Mammary epithelial cell (primary cell): ENCODE measurements at regions of chr10 and their contacts with region 1.

Region 1: DNA sequence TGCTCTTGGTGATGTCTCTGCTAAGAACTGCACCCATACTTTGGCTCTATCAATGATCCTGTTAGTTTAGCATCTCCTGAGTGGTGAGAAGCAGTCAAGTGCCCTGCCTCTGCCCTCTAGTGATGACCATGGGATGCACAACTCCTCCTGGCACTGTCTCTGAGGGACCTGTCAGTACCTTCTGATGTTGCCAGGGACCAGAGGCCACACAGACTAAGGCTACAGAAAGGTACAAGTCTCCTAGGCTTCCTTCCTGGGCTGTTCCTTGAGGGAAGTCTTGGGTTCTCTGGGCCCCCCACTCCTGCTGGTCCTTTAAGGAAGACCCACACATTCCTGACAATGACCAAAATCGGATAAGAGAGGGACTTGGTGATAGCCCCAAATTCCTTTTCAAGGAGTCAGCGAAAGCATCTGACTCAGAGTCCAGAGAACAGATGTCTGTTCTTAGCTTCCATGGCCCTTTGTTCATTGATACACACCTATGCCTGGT is 15.3 kb downstream of the NKX2-3 start:
- DNase-seq: peak; percentile 55
- H3K4me3 ChIP-seq: no peak overlapping the region
- H3K27ac ChIP-seq: no peak overlapping the region
- H3K4me1 ChIP-seq: peaks cover 8% of the 10 kb centered on the region
- H3K27me3 ChIP-seq: peaks cover 3% of the 10 kb centered on the region
- CTCF ChIP-seq: peak; percentile 12 to 57

Region 2: DNA sequence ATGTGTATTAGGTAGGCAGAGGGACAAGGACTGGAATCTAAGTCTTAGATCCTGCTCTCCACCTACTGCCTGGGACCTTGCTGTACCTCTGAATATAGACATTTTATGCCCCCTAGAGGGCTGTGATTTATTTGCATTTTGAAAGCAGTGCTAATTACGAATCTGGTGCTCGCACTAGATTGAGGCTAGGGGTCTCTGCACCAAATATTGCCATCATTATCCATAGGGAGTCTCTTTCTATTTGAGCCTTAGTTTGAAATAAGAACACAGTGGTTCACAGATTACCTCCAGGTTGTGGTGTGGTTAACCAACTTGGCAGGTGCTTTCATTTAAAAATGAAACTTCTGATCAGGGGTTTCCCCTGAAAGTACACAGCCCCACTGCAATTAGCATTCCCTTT is 177.1 kb before region 1 on chr10:
- CTCF ChIA-PET with region 1: no interaction called
- dilution Hi-C with region 1: no loop called
- in situ Hi-C with region 1: no loop called
- intact Hi-C with region 1: no loop called
- DNase-seq: peak; percentile 25
- H3K4me3 ChIP-seq: no peak overlapping the region
- H3K27ac ChIP-seq: no peak overlapping the region
- H3K4me1 ChIP-seq: no peaks in the 10 kb centered on the region
- H3K27me3 ChIP-seq: no peaks in the 10 kb centered on the region
- CTCF ChIP-seq: peak; percentile 46 to 64

Region 3: GRCh38 chr10:99435986-99436638 is 112.0 kb before region 1 on chr10:
- CTCF ChIA-PET with region 1: no interaction called
- dilution Hi-C with region 1: no loop called
- in situ Hi-C with region 1: no loop called
- intact Hi-C with region 1: loop called (anchors 1 kb)
- DNase-seq: peak; percentile 37
- H3K4me3 ChIP-seq: no peak overlapping the region
- H3K27ac ChIP-seq: no peak overlapping the region
- H3K4me1 ChIP-seq: peaks cover 3% of the 10 kb centered on the region
- H3K27me3 ChIP-seq: no peaks in the 10 kb centered on the region
- CTCF ChIP-seq: peak; percentile 42 to 52

Region 4: DNA sequence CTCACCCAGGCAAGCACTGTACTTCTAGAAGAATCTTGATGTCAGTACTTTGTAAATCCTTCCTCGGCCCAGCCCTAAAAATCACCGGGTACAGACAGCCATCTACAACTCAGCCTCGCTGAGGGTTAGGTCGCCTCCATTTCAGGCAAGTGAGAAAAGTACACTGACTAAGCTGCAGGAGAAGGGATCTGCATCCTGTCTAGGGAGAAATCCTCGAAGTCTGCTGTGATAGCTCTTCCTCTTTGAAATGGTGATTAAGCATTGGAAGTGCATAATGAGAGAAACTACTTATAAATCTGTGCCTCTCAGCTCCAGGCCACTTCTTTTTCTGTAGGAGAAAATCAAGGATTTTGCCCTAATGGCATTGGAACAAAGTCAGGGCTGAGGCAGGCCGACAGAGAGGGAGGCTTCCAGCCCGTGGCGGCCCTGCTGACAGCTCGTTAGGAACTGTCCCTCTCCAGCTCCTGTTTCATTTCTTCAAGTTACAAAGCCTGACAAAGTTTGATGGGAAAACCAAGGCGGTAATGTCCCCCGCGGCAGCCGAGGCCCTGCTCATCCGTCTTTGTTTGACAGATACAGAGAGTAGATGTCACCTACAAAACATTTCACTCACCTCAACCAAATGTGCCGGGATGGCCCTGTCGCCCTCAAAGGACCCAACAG is 103.6 kb before region 1 on chr10:
- CTCF ChIA-PET with region 1: no interaction called
- dilution Hi-C with region 1: loop called (anchors 5 kb)
- in situ Hi-C with region 1: no loop called
- intact Hi-C with region 1: no loop called
- DNase-seq: no peak
- H3K4me3 ChIP-seq: no peak overlapping the region
- H3K27ac ChIP-seq: no peak overlapping the region
- H3K4me1 ChIP-seq: no peaks in the 10 kb centered on the region
- H3K27me3 ChIP-seq: no peaks in the 10 kb centered on the region
- CTCF ChIP-seq: no peak

Region 5: GRCh38 chr10:99484603-99485581 is 63.2 kb before region 1 on chr10:
- CTCF ChIA-PET with region 1: no interaction called
- dilution Hi-C with region 1: no loop called
- in situ Hi-C with region 1: no loop called
- intact Hi-C with region 1: loop called (anchors 1 kb)
- DNase-seq: peak; percentile 2
- H3K4me3 ChIP-seq: no peak overlapping the region
- H3K27ac ChIP-seq: no peak overlapping the region
- H3K4me1 ChIP-seq: no peaks in the 10 kb centered on the region
- H3K27me3 ChIP-seq: peaks cover 7% of the 10 kb centered on the region
- CTCF ChIP-seq: peak; percentile 30 to 45

Region 6: GRCh38 chr10:99656611-99657010 is 108.5 kb after region 1 on chr10:
- CTCF ChIA-PET with region 1: no interaction called
- dilution Hi-C with region 1: no loop called
- in situ Hi-C with region 1: no loop called
- intact Hi-C with region 1: no loop called
- DNase-seq: peak; percentile 95
- H3K4me3 ChIP-seq: no peak overlapping the region
- H3K27ac ChIP-seq: peak overlapping the region; percentile 79
- H3K4me1 ChIP-seq: peaks cover 64% of the 10 kb centered on the region
- H3K27me3 ChIP-seq: no peaks in the 10 kb centered on the region
- CTCF ChIP-seq: no peak